CD4-positive, alpha-beta T cell (primary cell): ENCODE measurements at regions of chr1 and their contacts with region 1.

Region 1: DNA sequence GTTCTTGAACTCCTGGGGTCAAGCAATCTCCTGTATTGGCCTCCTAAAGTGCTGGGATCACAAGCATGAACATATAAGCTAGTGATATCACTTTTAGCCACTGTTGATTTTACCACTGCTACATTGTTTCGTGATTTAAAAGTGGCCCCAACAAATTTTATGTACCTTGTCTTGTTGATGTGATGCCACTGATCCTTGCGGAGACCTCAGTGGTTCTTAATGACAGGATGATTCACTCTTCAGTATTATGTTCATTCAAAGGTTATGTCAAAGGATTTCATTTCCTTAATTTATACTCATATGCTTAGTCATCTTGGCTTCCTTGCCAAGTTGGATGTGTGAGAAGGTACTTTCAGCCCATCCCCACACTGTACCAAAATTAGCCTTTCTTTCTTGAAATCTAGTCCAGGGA is 12.1 kb downstream of the PRKACB start:
- DNase-seq: peak in 3 of 14 experiments; percentile 20 to 35 (median 31)
- ATAC-seq: peak; percentile 48
- H3K4me3 ChIP-seq: no peak overlapping the region
- H3K4me3 Mint-ChIP-seq: peak overlapping the region; percentile 45
- H3K27ac ChIP-seq: no peak overlapping the region
- H3K27ac Mint-ChIP-seq: peak overlapping the region; percentile 72
- H3K4me1 ChIP-seq: peaks cover 26% of the 10 kb centered on the region
- H3K4me1 Mint-ChIP-seq: peaks cover 97% of the 10 kb centered on the region
- H3K27me3 ChIP-seq: no peaks in the 10 kb centered on the region
- H3K27me3 Mint-ChIP-seq: no peaks in the 10 kb centered on the region
- CTCF ChIP-seq: no peak

Region 2: DNA sequence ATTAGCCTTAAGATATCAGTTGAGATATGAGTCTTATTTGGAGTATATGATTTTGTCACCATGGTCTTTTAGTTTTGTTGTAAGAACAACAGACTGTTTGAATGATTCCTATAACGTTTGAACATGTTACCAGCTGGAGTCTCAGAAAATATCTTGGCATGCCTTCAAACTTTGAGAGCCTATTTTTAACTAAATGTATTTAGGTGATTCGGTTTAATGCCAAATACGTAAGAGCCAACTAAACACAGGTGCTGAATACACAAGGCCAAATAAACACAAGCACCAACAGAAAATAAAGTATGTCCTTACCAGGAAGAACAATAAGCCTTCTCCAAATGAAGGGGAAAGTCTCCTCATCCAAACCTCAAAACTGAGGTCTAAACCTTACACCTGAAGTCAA is 36.5 kb after region 1 on chr1:
- CTCF ChIA-PET with region 1: no interaction called
- POLR2A ChIA-PET with region 1: interaction called, 3 read pairs
- intact Hi-C with region 1: loop called in 1 of 2 experiments (anchors 5 kb)
- DNase-seq: no peak
- ATAC-seq: no peak
- H3K4me3 ChIP-seq: no peak overlapping the region
- H3K4me3 Mint-ChIP-seq: no peak overlapping the region
- H3K27ac ChIP-seq: no peak overlapping the region
- H3K27ac Mint-ChIP-seq: no peak overlapping the region
- H3K4me1 ChIP-seq: no peaks in the 10 kb centered on the region
- H3K4me1 Mint-ChIP-seq: peaks cover 4% of the 10 kb centered on the region
- H3K27me3 ChIP-seq: no peaks in the 10 kb centered on the region
- H3K27me3 Mint-ChIP-seq: no peaks in the 10 kb centered on the region
- CTCF ChIP-seq: no peak

Region 3: GRCh38 chr1:84298328-84298683 is 142.1 kb after region 1 on chr1:
- CTCF ChIA-PET with region 1: no interaction called
- POLR2A ChIA-PET with region 1: no interaction called
- intact Hi-C with region 1: loop called in 1 of 2 experiments (anchors 5 kb)
- DNase-seq: peak in 12 of 14 experiments; percentile 5 to 74 (median 44)
- ATAC-seq: peak; percentile 72
- H3K4me3 ChIP-seq: peak overlapping the region; percentile 82
- H3K4me3 Mint-ChIP-seq: peak overlapping the region; percentile 89
- H3K27ac ChIP-seq: no peak overlapping the region
- H3K27ac Mint-ChIP-seq: peak overlapping the region; percentile 37
- H3K4me1 ChIP-seq: peaks cover 24% of the 10 kb centered on the region
- H3K4me1 Mint-ChIP-seq: peaks cover 48% of the 10 kb centered on the region
- H3K27me3 ChIP-seq: peaks cover 0 to 9% of the 10 kb centered on the region in 2 experiments
- H3K27me3 Mint-ChIP-seq: peaks cover 12% of the 10 kb centered on the region
- CTCF ChIP-seq: no peak

Region 4: GRCh38 chr1:84489766-84490165 is 333.6 kb after region 1 on chr1:
- CTCF ChIA-PET with region 1: no interaction called
- POLR2A ChIA-PET with region 1: no interaction called
- intact Hi-C with region 1: no loop called
- DNase-seq: no peak
- ATAC-seq: no peak
- H3K4me3 ChIP-seq: no peak overlapping the region
- H3K4me3 Mint-ChIP-seq: no peak overlapping the region
- H3K27ac ChIP-seq: no peak overlapping the region
- H3K27ac Mint-ChIP-seq: no peak overlapping the region
- H3K4me1 ChIP-seq: peaks cover 4% of the 10 kb centered on the region
- H3K4me1 Mint-ChIP-seq: peaks cover 35% of the 10 kb centered on the region
- H3K27me3 ChIP-seq: no peaks in the 10 kb centered on the region
- H3K27me3 Mint-ChIP-seq: no peaks in the 10 kb centered on the region
- CTCF ChIP-seq: no peak